ENCODE measurements at regions of chr18 and their contacts with region 1.

Region 1: GRCh38 chr18:58213440-58213839 is 169.4 kb downstream of the NEDD4L start:
- DNase-seq: peak; percentile 89
- H3K4me3 ChIP-seq: no peak overlapping the region
- H3K27ac ChIP-seq: peak overlapping the region; percentile 78
- H3K4me1 ChIP-seq: peaks cover 78% of the 10 kb centered on the region
- H3K27me3 ChIP-seq: no peaks in the 10 kb centered on the region
- CTCF ChIP-seq: no peak

Region 2: DNA sequence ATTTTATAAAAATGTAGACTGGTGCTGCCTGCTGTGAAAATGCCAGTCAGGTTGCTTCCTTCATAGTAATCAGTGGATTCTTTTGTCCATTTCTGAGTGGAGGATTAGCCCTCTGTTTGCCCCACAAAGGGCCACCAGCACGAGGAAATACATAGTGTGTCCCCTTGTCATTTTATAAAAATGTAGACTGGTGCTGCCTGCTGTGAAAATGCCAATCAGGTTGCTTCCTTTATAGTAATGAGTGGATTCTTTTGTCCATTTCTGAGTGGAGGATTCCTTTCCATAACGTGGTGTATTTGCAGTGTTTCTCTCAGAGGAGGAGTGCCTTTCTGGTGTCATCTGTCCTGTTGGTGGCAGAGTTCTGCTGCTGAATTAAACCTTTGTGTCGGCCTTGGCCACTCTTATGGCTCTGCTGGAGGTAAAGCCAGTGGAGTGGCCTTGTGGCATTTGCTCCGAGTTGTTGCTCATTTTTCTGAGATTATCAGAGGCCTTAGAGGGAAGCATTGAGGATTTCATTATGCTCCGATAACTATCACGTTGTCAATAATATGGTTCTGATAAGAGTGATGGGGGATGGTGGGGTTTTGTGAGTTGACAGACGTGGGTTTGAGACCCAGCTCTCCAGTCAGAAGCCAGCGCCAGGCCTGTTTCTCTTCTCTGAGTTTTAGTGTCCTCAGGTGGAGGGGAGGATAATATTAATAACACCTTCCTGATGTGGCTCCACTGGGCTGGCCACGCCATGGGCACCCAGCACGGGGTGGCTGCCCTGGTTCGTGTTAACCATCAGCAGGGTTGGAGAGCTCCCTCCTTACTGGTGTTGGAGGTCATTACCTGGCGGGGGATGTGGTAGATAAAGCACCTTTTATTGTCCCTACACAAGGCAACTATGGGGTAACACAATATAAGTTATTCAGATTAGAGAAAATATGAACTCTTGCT is 72.8 kb before region 1 on chr18:
- CTCF ChIA-PET with region 1: no interaction called
- dilution Hi-C with region 1: no loop called
- in situ Hi-C with region 1: no loop called
- intact Hi-C with region 1: no loop called
- DNase-seq: no peak
- H3K4me3 ChIP-seq: no peak overlapping the region
- H3K27ac ChIP-seq: no peak overlapping the region
- H3K4me1 ChIP-seq: peaks cover 8% of the 10 kb centered on the region
- H3K27me3 ChIP-seq: no peaks in the 10 kb centered on the region
- CTCF ChIP-seq: no peak

Region 3: GRCh38 chr18:58195278-58195765 is 18.1 kb before region 1 on chr18:
- CTCF ChIA-PET with region 1: no interaction called
- dilution Hi-C with region 1: no loop called
- in situ Hi-C with region 1: no loop called
- intact Hi-C with region 1: loop called (anchors 1 kb)
- DNase-seq: peak; percentile 73
- H3K4me3 ChIP-seq: peak overlapping the region; percentile 62 to 98 (median 86)
- H3K27ac ChIP-seq: peak overlapping the region; percentile 93
- H3K4me1 ChIP-seq: peaks cover 34% of the 10 kb centered on the region
- H3K27me3 ChIP-seq: no peaks in the 10 kb centered on the region
- CTCF ChIP-seq: no peak

Measured in mammary epithelial cell (primary cell).